AG04450 (cell line): ENCODE measurements at regions of chr3 and their contacts with region 1.

Region 1: GRCh38 chr3:56494686-56495322 is 26.5 kb upstream of the ERC2 start:
- DNase-seq: peak; percentile 58
- H3K4me3 ChIP-seq: no peak overlapping the region
- H3K27ac ChIP-seq: no peak overlapping the region
- H3K27me3 ChIP-seq: no peaks in the 10 kb centered on the region
- CTCF ChIP-seq: peak; percentile 97

Region 2: GRCh38 chr3:56484122-56484521 is 10.7 kb before region 1 on chr3:
- CTCF ChIA-PET with region 1: interaction called, 10 read pairs
- POLR2A ChIA-PET with region 1: no interaction called
- DNase-seq: no peak
- H3K4me3 ChIP-seq: no peak overlapping the region
- H3K27ac ChIP-seq: no peak overlapping the region
- H3K27me3 ChIP-seq: no peaks in the 10 kb centered on the region
- CTCF ChIP-seq: no peak